Activated B cell treated with CpG ODN at 0.5 μM for 24 hours (primary cell): ENCODE measurements at regions of chr3 and their contacts with region 1.

Region 1: DNA sequence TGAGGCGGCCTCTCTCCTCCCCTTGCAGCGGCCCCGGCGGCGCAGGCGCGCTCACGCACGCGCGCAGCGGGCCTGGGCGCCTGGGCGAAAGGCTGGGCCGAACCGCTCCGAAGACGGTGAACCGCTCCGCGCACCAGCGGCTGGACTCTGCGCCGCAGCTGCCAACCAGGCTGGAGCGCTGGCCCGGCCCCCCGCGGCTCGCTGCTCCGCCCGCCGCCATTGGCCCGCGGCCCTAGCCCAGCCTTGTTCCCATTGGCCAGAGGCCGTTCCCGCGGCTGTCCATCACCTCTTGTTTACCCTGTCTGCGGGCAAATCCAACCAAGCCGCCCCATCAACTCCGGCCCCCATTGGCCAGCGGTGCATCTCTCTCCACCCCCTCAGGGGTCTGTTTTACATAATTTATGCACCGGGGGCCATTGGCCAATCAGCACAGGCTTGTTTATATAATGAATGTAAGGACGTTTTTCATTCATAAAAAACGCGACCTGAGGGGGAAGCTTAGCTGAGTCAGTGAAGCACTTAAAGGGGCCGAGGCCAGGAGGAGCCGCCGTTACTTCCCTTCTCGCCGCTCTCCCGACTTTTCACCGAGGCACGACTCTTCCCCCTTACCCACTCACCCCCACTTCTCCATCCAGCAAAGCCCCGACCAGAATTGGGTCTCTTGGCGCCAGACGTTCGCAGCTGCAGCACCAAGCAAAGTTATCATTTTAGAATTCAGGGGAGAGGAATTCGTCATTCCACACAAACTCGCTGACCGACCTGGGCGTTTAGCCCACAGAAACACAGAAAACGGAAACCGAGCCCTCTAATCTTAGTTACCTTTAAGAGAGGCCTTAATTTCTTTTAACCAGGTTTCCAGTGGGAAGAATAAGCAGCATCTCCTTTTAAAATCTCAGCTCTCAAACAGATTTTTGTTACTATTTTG is at the start of gene ETV5:
- DNase-seq: peak; percentile 85
- ATAC-seq: peak; percentile 95
- H3K4me3 Mint-ChIP-seq: peak within 1 kb of the TSS; percentile 95
- H3K27ac Mint-ChIP-seq: peak within 1 kb of the TSS; percentile 80
- H3K4me1 Mint-ChIP-seq: peaks cover 35% of the 10 kb centered on the region
- H3K27me3 Mint-ChIP-seq: peaks cover 42% of the 10 kb centered on the region
- CTCF ChIP-seq: no peak
- total RNA-seq, gene ETV5: 0.49 and 0.89 TPM in 2 replicates

Region 2: DNA sequence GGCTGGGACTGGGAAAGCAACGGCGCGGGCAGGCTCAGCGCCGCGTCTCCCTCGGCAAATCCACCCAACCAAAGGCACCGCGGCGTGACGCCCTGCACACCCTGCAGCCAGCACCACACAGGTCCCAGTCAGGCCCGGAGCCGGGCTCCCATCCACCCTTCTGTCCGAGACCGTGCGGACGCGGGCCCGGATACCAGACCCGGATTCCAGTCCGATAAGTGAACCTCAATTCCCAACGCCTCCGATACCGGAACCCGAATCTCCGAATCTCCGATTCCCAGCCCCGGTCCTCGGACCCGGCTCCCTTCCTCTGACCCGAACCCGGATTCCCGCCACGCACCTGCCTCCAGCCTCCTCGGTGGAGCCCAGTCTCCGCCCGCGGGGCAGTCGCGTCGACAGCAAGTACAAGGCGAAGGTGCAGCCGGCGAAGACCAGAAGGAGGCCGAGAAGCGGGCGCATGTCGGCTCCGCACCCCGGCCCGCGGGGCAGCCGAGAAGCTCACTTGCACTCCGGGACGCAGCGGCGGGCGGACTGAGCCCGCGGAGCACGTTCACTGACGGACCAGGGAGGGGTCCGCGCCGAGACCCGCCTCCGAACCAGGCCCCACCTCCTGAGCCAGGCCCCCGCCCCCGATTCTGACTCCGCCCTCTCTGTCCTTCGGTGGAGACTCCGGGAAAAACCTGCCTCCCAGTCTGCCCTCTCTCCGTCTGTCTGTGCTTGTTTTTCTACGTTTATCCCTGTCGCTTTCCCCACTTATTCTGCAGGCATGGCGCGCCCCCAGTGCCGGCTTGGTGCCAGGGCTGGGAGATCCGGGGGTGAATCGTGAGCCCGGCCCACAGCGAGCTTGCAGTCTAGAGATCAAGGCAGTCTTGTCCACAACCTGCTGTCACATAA is 610.5 kb before region 1 on chr3 and contains the start of gene TMEM41A:
- CTCF ChIA-PET with region 1: no interaction called
- POLR2A ChIA-PET with region 1: no interaction called
- intact Hi-C with region 1: loop called (anchors 2 kb)
- DNase-seq: peak; percentile 86
- ATAC-seq: peak; percentile 99
- H3K4me3 Mint-ChIP-seq: peak within 1 kb of the TSS; percentile 92
- H3K27ac Mint-ChIP-seq: peak within 1 kb of the TSS; percentile 73
- H3K4me1 Mint-ChIP-seq: peaks cover 19% of the 10 kb centered on the region
- H3K27me3 Mint-ChIP-seq: no peaks in the 10 kb centered on the region
- CTCF ChIP-seq: no peak
- total RNA-seq, gene TMEM41A: 20.7 and 23.3 TPM in 2 replicates

Region 3: DNA sequence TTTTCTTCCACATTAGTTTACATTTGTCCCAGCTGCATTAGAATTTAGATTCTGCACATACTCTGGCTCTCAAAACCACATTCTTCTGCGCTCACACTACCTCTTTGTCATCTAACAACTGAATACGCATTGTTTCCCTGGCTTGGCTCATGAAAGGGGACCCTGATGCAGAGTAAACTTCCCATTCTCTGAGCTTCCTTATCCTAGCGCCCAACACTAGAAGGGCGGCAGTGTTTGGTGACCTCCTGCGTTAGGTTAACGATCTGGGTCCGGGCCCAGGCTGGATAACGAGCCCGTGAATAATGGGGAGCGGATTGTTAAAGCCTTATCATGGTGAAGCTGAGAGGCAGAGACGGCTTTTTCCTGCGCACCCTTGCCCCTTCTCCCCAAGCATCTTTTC is 64.2 kb before region 1 on chr3:
- CTCF ChIA-PET with region 1: no interaction called
- POLR2A ChIA-PET with region 1: no interaction called
- intact Hi-C with region 1: no loop called
- DNase-seq: no peak
- ATAC-seq: no peak
- H3K4me3 Mint-ChIP-seq: no peak overlapping the region
- H3K27ac Mint-ChIP-seq: no peak overlapping the region
- H3K4me1 Mint-ChIP-seq: no peaks in the 10 kb centered on the region
- H3K27me3 Mint-ChIP-seq: peaks cover 7% of the 10 kb centered on the region
- CTCF ChIP-seq: no peak

Region 4: DNA sequence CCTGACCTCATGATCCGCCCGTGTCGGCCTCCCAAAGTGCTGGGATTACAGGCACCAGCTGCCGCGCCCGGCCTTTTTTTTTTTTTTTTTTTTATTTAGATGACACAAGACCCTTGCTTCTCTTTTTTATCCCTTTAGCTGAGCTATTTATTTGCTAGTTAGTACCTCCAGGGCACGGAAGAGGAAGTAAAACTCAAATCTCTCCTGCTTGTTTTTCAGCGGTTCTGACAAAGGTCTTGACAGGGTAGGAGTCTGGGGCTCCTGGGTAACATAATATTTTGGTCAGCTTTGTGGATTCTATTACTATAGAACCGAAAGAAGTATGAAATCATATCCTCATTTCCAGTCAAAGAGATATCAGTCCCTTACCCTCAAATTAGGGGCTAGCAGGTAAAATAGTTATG is 43.7 kb after region 1 on chr3:
- CTCF ChIA-PET with region 1: interaction called, 3 read pairs
- POLR2A ChIA-PET with region 1: interaction called, 6 read pairs
- intact Hi-C with region 1: loop called (anchors 1 kb)
- DNase-seq: no peak
- ATAC-seq: peak; percentile 92
- H3K4me3 Mint-ChIP-seq: peak overlapping the region; percentile 67
- H3K27ac Mint-ChIP-seq: peak overlapping the region; percentile 87
- H3K4me1 Mint-ChIP-seq: peaks cover 30% of the 10 kb centered on the region
- H3K27me3 Mint-ChIP-seq: no peaks in the 10 kb centered on the region
- CTCF ChIP-seq: no peak

Region 5: DNA sequence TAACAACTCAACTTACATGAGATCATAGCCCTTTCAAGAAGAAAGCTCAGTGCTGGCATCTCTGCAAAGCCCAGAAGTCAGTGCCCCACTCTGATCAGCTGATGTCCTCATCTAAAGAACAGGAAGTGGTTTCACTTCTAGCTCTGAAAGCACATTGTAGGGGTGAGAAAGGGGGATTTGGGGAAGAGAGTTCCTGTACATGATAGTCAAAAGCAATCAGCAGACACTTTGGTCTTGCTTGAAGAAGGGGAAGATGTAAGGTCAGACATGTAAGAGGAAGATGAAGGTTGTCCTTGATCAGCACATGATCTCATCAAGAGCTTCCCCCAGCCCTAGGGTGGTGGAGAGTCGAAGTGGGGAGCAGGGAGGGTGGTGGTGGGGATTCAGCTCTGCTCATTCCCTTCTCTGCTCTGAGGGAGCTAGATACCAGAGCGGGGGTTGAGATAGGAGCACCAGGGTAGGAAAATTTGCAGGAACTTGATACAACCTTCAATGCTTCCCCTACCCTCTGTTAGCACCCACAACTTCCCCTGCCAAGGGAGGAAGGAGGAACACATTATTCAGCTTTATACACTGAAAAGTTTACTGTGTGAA is 76.1 kb after region 1 on chr3:
- CTCF ChIA-PET with region 1: no interaction called
- POLR2A ChIA-PET with region 1: interaction called, 6 read pairs
- intact Hi-C with region 1: loop called (anchors 1 kb)
- DNase-seq: no peak
- ATAC-seq: peak; percentile 91
- H3K4me3 Mint-ChIP-seq: peak overlapping the region; percentile 49
- H3K27ac Mint-ChIP-seq: peak overlapping the region; percentile 85
- H3K4me1 Mint-ChIP-seq: peaks cover 16% of the 10 kb centered on the region
- H3K27me3 Mint-ChIP-seq: no peaks in the 10 kb centered on the region
- CTCF ChIP-seq: no peak

Region 6: DNA sequence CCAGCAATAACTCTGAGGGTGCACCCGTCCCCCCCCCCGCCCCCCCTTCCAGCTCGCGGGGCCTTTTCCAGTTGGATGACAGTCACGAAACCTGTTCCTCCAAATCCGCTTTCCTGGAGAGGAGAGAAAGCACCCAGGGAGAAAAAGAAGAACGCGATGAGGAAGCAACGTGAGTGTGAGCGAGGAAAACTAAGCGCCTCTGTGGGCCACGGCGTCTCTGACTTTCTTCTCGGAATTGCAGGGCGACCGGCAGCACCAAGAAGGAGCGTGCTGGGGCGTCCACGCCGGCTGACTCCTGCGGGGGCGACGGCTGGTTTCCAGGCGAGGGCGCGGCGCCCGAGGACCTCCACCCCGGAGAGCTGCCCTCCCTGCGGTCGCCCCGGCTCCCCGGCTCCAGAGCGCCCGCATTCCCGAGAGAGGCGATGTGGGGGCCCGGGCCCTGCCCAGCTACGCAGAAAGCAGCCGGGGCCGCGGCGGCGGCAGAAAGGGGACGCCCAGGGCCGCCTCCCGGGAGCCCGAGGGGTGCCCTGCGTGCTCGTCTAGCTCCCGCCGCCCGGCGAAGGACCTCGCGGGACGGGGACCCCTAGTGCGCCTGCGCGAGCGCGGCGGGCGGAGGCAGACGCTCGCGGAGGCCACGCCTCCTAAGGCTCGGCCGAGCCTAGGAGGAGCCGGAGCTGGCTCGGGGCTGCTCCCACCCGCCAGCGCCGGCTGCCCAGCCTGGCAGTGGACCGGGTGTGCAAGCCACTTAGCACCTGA is 718.0 kb after region 1 on chr3:
- CTCF ChIA-PET with region 1: no interaction called
- POLR2A ChIA-PET with region 1: no interaction called
- intact Hi-C with region 1: loop called (anchors 5 kb)
- DNase-seq: peak; percentile 85
- ATAC-seq: peak; percentile 94
- H3K4me3 Mint-ChIP-seq: peak overlapping the region; percentile 71
- H3K27ac Mint-ChIP-seq: no peak overlapping the region
- H3K4me1 Mint-ChIP-seq: peaks cover 22% of the 10 kb centered on the region
- H3K27me3 Mint-ChIP-seq: peaks cover 47% of the 10 kb centered on the region
- CTCF ChIP-seq: no peak